WTC11 (cell line): ENCODE measurements at regions of chr7 and their contacts with region 1.

Region 1: DNA sequence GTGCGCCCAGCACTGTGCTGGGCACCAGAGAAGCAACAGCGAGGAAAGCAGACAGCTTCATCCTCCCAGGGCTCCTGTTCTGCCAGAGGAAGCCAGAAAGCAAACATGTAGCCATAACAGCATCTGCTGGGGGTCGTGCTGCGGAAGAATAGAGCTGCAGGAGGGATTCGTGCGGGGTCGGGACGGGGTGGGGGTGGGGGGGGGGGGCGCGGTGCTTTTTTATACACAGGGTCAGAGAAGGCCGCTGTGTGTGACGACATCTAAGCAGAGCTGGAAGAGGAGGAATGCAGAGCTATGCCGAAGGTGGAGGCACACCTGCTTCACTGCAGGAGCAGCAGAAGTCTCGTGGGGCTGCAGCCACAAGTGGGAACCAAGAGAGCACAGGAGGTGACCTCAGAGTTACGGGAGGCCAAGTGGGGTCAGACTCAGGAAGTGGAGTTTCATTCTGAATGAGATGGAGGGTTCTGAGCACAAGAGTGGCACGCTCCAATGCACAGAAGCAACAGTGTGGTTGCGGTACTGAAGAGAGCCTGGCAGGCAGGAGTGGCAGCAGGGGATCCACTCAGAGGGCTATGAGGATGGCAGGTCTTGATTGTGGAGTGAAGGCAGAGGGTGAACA is 11.1 kb downstream of the PKD1L1 start:
- DNase-seq: no peak
- ATAC-seq: peak; percentile 14
- H3K4me3 Mint-ChIP-seq: no peak overlapping the region
- H3K27ac Mint-ChIP-seq: peak overlapping the region; percentile 33; the same call in 1 of the 2 replicates
- H3K4me1 Mint-ChIP-seq: peaks cover 45% of the 10 kb centered on the region
- H3K27me3 Mint-ChIP-seq: no peaks in the 10 kb centered on the region
- CTCF ChIP-seq: no peak

Region 2: DNA sequence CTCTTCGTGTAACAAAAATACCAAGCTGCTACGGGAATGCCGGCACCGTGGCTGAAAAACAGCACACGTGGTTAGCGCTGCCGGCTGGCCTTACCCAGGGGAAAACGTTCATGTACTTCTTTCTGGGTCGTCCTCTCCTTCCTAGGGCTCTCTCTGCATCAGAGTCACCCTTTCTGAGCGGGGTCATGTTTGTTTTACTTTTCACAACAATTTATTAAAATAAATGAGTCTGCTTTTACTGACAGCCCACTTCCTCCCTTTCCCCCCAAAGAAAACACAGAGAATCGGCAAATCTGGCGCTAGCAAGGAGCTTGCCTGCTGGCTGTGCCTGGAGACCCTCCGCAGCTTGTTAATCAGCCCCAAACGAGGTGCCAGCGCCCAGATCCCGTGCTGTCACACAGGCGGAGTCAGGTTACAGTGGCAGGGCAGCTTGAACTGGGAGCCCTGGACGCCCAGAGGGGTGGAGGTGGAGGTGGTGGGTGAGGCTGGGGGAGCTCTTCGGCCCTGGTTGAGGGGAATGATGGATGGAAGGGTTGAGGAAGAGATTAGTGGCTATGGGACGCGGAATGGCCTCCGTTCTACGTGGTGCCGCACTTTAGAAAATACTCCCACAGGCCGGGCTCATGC is 193.1 kb before region 1 on chr7:
- CTCF ChIA-PET with region 1: no interaction called
- POLR2A ChIA-PET with region 1: no interaction called
- DNase-seq: peak; percentile 57
- ATAC-seq: peak; percentile 92
- H3K4me3 Mint-ChIP-seq: no peak overlapping the region
- H3K27ac Mint-ChIP-seq: no peak overlapping the region
- H3K4me1 Mint-ChIP-seq: peaks cover 20% of the 10 kb centered on the region
- H3K27me3 Mint-ChIP-seq: no peaks in the 10 kb centered on the region
- CTCF ChIP-seq: no peak

Region 3: DNA sequence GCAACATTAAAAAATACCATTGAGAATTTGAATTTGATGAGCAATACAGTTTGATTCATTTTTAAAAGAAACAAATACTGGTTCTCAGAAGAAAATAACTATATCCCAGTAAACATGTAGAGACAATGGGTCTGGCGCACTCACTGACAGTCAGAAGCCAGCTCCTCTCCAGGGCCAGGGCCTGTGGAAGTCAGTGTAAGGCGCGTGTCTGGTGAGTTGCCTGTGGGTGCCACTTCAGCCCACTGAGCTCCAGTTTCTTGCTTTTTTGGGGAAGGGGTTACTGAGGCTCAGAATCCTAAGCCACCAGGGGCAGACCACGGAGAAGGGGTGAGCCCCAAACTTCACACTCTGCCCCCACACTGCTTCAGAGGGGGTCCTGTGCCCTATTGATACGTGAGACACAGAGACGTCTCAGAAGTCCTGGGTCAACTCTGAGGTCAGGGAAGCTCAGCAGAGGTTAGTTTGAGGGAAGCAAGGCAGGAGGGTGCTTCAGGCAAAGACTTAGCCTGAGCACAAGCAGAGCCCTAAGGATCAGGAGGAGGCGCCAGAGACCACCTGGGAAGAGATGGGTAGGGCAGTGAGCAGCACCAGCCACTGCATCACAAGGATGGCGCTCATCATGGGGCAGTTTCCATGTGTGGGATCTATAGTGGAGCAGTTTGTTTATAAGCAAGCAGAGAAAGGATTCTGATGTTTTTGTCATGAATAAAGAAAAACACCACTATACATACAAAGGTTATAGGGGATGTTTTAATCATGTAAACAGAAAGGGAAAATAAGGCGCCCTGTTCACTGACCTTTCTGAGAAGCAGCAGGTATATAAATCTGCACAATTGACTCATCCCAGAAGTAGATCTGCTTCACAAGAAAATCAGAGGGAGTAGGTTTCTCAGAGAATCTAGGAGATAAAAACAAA is 84.6 kb before region 1 on chr7:
- CTCF ChIA-PET with region 1: interaction called, 14 read pairs
- POLR2A ChIA-PET with region 1: no interaction called
- DNase-seq: peak; percentile 51
- ATAC-seq: peak; percentile 96
- H3K4me3 Mint-ChIP-seq: no peak overlapping the region
- H3K27ac Mint-ChIP-seq: no peak overlapping the region
- H3K4me1 Mint-ChIP-seq: no peaks in the 10 kb centered on the region
- H3K27me3 Mint-ChIP-seq: no peaks in the 10 kb centered on the region; the same call in 1 of the 2 replicates
- CTCF ChIP-seq: no peak

Region 4: GRCh38 chr7:47893247-47893646 is 43.9 kb before region 1 on chr7:
- CTCF ChIA-PET with region 1: interaction called, 17 read pairs
- POLR2A ChIA-PET with region 1: no interaction called
- DNase-seq: peak; percentile 78
- ATAC-seq: peak; percentile 80
- H3K4me3 Mint-ChIP-seq: no peak overlapping the region
- H3K27ac Mint-ChIP-seq: no peak overlapping the region
- H3K4me1 Mint-ChIP-seq: peaks cover 34% of the 10 kb centered on the region
- H3K27me3 Mint-ChIP-seq: peaks cover 6% of the 10 kb centered on the region; the same call in 1 of the 2 replicates
- CTCF ChIP-seq: peak; percentile 75

Region 5: GRCh38 chr7:47957156-47957555 is 20.0 kb after region 1 on chr7:
- CTCF ChIA-PET with region 1: no interaction called
- POLR2A ChIA-PET with region 1: no interaction called
- DNase-seq: no peak
- ATAC-seq: no peak
- H3K4me3 Mint-ChIP-seq: no peak overlapping the region
- H3K27ac Mint-ChIP-seq: no peak overlapping the region
- H3K4me1 Mint-ChIP-seq: peaks cover 14% of the 10 kb centered on the region
- H3K27me3 Mint-ChIP-seq: no peaks in the 10 kb centered on the region; the same call in 1 of the 2 replicates
- CTCF ChIP-seq: no peak